ENCODE measurements at regions of chr6 and their contacts with region 1.

Region 1: DNA sequence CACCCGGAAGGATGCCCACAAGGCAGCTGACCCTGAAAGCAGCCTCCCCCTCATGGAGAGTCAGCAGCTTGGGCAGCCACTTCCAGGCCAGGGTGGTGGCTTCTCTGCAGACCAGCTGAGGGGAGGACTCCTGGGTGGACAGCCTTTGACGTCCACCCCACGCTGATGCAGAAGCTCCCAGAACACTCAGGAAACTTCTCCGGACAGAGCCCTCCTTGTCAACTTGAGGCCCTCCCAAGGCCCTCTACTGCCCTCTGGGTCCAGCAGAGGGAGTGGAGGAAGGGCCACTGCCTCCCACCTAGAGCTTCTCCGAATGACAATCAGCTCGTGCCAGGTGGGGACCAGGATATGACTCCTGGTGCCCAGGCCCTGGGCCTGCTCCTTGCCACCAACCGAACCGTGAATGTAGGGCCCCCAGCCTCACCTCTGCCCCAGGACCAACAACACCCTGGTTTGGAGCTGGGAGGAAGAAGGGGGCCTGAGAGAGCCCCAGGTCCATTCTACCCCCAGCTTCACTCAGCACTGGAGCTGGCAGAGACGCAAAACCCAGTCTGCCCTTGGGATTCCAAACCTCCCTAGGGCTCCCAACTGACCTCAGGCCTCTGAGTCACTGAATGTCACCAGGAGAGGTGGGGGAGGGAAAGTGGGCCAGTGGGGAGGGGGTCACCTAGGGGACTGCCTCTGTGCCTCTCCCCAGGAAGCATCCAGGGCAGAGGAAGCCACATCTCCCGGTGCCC is 10.9 kb upstream of the SLC22A7 start:
- DNase-seq: no peak
- ATAC-seq: peak; percentile 59
- H3K4me3 Mint-ChIP-seq: 0 out of 2 replicates have a peak overlapping the region, but pooled peaks have one; percentile 40
- H3K27ac Mint-ChIP-seq: no peak overlapping the region
- H3K4me1 Mint-ChIP-seq: peaks cover 7% of the 10 kb centered on the region
- H3K27me3 Mint-ChIP-seq: peaks cover 21% of the 10 kb centered on the region
- CTCF ChIP-seq: no peak

Region 2: GRCh38 chr6:43247113-43247999 is 39.8 kb before region 1 on chr6:
- CTCF ChIA-PET with region 1: interaction called, 10 read pairs
- POLR2A ChIA-PET with region 1: no interaction called
- DNase-seq: peak; percentile 93
- ATAC-seq: peak; percentile 87
- H3K4me3 Mint-ChIP-seq: peak overlapping the region; percentile 92
- H3K27ac Mint-ChIP-seq: peak overlapping the region; percentile 97; the same call in 1 of the 2 replicates
- H3K4me1 Mint-ChIP-seq: peaks cover 27% of the 10 kb centered on the region
- H3K27me3 Mint-ChIP-seq: peaks cover 23% of the 10 kb centered on the region
- CTCF ChIP-seq: no peak

Region 3: GRCh38 chr6:43274916-43275597 is 12.1 kb before region 1 on chr6:
- CTCF ChIA-PET with region 1: interaction called, 12 read pairs
- POLR2A ChIA-PET with region 1: interaction called, 3 read pairs
- DNase-seq: no peak
- ATAC-seq: peak; percentile 7
- H3K4me3 Mint-ChIP-seq: peak overlapping the region; percentile 84
- H3K27ac Mint-ChIP-seq: no peak overlapping the region
- H3K4me1 Mint-ChIP-seq: peaks cover 40% of the 10 kb centered on the region
- H3K27me3 Mint-ChIP-seq: peaks cover 73% of the 10 kb centered on the region
- CTCF ChIP-seq: no peak

Region 4: DNA sequence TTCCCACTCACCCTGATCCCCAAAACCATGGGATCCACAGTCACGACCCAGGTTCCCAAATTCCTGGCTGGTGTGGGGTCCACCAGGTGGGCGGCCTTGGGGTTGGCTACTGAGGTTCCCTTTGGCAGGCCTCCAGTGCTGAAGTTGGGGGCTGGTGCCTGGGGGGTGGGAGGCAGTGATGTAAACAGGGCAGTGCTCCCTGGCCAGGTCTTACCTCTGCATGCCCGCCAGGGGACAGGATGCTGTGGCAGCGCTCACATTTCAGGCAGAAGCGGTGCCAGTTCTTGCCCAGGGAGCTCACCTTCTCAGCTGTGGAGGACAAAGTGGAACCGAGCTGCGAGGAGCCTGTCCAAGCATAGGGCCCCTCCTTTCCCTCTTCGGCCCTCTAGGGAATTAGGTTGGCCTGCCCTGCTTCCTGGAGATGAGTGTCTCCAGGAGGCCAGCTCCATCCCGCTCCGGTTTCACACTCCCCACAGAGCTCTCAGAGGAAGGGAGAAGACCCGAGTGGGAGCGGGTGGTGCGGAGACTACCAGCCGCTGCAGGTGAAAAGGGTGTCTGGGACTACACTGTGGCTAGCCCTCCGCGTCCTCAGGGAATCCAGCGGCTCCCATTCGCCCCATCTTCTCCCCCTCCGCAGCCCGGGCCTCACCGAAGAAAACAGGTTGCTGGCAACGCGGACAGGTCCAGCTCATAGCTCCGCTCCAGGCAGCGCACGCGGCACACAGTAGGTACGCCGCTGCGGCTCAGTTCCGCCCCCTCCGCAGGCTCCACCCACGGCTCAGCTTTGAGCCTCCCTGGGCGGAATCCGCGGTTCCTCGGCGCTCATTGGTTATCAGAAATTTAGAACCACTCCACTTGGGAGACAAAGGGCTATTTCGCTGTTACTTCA is 21.2 kb after region 1 on chr6 and contains the start of gene CRIP3:
- CTCF ChIA-PET with region 1: interaction called, 53 read pairs
- POLR2A ChIA-PET with region 1: interaction called, 6 read pairs
- DNase-seq: peak; percentile 90
- ATAC-seq: peak; percentile 98
- H3K4me3 Mint-ChIP-seq: peak within 1 kb of the TSS; percentile 84
- H3K27ac Mint-ChIP-seq: peak within 1 kb of the TSS; percentile 84; the same call in 1 of the 2 replicates
- H3K4me1 Mint-ChIP-seq: peaks cover 27% of the 10 kb centered on the region
- H3K27me3 Mint-ChIP-seq: 0 out of 2 replicates have a peak, but pooled peaks cover 4% of the 10 kb centered on the region
- CTCF ChIP-seq: no peak
- total RNA-seq, gene CRIP3: 44.7 to 48.9 TPM (median 45.6 TPM) in 3 replicates

Region 5: DNA sequence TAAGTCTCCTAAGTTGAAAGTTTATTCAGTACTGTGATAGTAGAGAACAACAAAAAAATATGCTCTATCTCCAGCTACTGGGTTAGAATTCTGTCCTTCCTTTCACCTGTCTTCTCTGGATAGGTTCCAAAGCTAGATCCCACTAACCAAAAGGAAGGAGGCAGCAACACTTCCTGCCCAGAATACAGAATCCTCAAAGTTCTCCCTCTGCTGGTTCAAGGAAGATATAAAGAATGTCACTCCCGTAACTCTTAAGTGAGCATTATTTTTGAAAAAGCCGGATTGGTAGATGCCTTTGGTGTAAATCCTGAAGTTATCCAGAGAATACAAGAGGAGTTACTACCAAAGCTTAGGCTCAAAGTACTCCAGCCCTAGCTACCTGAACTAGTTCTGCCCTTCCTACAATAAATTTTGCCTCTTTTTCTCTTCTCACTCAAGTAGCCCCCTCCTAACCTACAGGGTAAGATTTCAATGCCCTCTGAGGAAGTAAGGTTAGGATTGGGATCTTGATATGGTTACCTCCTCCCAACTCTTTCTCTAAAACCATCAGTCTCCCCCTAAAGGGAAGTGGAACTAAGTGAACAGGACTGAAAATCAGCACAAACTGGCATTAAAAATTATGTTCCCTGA is 47.4 kb after region 1 on chr6:
- CTCF ChIA-PET with region 1: interaction called, 24 read pairs
- POLR2A ChIA-PET with region 1: no interaction called
- DNase-seq: no peak
- ATAC-seq: peak; percentile 97
- H3K4me3 Mint-ChIP-seq: no peak overlapping the region
- H3K27ac Mint-ChIP-seq: peak overlapping the region; percentile 50; the same call in 1 of the 2 replicates
- H3K4me1 Mint-ChIP-seq: 0 out of 2 replicates have a peak, but pooled peaks cover 4% of the 10 kb centered on the region
- H3K27me3 Mint-ChIP-seq: no peaks in the 10 kb centered on the region; the same call in 1 of the 2 replicates
- CTCF ChIP-seq: no peak

Measured in WTC11 (cell line).